Activated CD4-positive, alpha-beta memory T cell treated with anti-CD3 and anti-CD28 coated beads for 36 hours (primary cell): ENCODE measurements at regions of chr19 and their contacts with region 1.

Region 1: GRCh38 chr19:10251792-10252694 is at the start of gene MRPL4:
- DNase-seq: peak; percentile 98
- H3K4me3 Mint-ChIP-seq: peak within 1 kb of the TSS; percentile 97
- H3K27ac Mint-ChIP-seq: peak within 1 kb of the TSS; percentile 96
- H3K4me1 Mint-ChIP-seq: peaks cover 20% of the 10 kb centered on the region
- H3K27me3 Mint-ChIP-seq: no peaks in the 10 kb centered on the region
- total RNA-seq, gene MRPL4: 106 to 115 TPM

Region 2: DNA sequence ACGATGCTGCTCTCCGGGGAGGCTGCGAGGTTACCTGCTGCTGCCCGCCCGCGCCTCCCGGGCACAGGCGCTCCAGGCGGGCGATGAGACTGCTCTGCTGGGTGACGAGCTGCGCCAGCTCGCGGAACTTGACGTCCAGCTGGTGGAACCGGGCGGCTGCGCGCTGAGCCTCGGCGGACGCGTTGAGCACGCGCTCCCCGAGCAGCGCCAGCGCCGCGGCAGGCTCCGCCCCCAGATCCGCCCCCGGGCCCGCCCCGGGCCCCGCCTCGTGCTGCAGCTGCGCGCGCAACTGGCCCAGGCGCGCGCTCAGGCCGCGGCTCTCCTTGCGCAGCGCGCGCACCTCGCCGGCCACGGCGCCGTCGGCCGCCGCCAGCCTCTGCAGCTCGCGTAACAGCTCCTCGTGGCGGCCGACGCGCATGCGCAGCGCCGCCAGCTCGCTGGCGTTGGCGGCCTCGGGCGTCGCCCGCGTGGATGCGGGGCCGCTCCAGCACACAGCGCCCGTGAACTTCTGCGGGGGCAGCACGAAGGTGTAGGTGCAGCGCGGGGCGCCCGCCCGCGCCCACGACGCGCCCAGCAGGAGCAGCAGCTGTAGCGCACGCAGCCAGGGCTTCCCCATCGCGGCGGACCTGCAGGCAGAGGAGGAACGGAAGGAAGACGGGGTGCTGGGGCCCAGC is 156.0 kb before region 1 on chr19:
- CTCF ChIA-PET with region 1: interaction called, 15 read pairs
- POLR2A ChIA-PET with region 1: no interaction called
- intact Hi-C with region 1: no loop called
- DNase-seq: peak; percentile 92
- H3K4me3 Mint-ChIP-seq: peak overlapping the region; percentile 62
- H3K27ac Mint-ChIP-seq: peak overlapping the region; percentile 23
- H3K4me1 Mint-ChIP-seq: peaks cover 34% of the 10 kb centered on the region
- H3K27me3 Mint-ChIP-seq: no peaks in the 10 kb centered on the region

Region 3: GRCh38 chr19:10142701-10143375 is 109.2 kb before region 1 on chr19:
- CTCF ChIA-PET with region 1: interaction called, 10 read pairs
- POLR2A ChIA-PET with region 1: interaction called, 4 read pairs
- intact Hi-C with region 1: no loop called
- DNase-seq: peak; percentile 51
- H3K4me3 Mint-ChIP-seq: no peak overlapping the region
- H3K27ac Mint-ChIP-seq: peak overlapping the region; percentile 94
- H3K4me1 Mint-ChIP-seq: peaks cover 44% of the 10 kb centered on the region
- H3K27me3 Mint-ChIP-seq: no peaks in the 10 kb centered on the region

Region 4: DNA sequence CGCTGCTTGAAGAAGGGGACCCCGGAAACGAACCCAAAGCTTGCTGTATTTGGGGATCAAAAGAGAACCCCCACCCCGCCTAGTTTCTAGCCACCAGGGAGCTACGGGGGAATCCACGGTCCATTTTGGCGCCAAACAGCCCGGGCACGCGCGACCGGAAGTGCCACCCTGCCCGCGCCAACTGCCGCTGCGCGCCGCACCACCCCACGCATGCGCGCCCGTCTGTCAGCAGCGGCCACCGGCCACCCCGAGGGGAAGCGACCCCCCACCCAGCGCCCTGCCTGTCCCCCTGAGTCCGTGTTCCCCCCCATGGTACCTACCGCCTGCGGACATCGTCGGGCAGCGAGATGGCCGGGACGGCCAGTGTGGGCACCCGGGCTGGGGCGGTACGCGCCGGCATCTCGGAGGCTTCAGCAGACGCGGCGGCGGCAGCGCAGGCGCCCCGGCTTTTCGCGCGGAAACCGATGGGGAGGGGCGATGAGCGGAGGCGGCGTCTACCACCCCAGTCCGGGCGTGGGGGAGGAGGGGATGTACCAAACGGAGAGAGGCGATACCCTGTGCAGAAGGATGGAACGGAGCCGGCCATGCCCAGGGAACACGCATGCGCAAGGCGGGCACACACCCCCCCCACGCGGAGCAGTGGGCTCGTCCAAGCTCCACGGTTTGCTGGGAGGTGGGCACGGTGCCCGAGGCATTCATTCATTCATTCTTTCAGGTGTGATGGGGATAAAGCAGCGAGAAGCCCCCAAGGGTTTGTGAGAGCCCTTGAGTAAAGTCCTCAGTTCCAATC is 57.3 kb before region 1 on chr19 and contains the start of gene DNMT1:
- CTCF ChIA-PET with region 1: interaction called, 44 read pairs
- POLR2A ChIA-PET with region 1: interaction called, 3 read pairs
- intact Hi-C with region 1: loop called (anchors 2 kb)
- DNase-seq: peak; percentile 99
- H3K4me3 Mint-ChIP-seq: peak within 1 kb of the TSS; percentile 98
- H3K27ac Mint-ChIP-seq: peak within 1 kb of the TSS; percentile 98
- H3K4me1 Mint-ChIP-seq: peaks cover 52% of the 10 kb centered on the region
- H3K27me3 Mint-ChIP-seq: no peaks in the 10 kb centered on the region
- total RNA-seq, gene DNMT1: 356 to 357 TPM

Region 5: DNA sequence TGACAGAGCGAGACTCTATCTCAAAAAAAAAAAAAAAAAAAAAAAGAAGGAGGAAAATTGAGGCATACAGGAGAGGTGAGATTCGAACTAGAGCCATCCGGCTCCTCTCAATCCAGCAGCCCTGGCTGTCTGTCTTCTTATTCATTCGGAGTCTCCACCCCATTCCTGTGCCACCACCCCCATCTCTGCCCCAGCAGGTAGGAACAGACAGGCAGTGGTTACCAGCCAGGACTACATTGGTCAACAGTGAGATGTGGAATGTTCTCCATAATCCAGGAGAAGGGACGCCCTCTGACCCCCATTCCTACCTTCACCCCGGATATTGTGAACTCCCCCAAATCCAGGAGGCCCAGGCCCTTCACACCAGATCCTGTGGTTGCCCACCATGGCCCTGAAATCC is 14.3 kb before region 1 on chr19:
- CTCF ChIA-PET with region 1: interaction called, 27 read pairs
- POLR2A ChIA-PET with region 1: no interaction called
- intact Hi-C with region 1: no loop called
- DNase-seq: no peak
- H3K4me3 Mint-ChIP-seq: no peak overlapping the region
- H3K27ac Mint-ChIP-seq: no peak overlapping the region
- H3K4me1 Mint-ChIP-seq: peaks cover 17% of the 10 kb centered on the region
- H3K27me3 Mint-ChIP-seq: no peaks in the 10 kb centered on the region